ENCODE measurements at regions of chr1 and their contacts with region 1.

Region 1: DNA sequence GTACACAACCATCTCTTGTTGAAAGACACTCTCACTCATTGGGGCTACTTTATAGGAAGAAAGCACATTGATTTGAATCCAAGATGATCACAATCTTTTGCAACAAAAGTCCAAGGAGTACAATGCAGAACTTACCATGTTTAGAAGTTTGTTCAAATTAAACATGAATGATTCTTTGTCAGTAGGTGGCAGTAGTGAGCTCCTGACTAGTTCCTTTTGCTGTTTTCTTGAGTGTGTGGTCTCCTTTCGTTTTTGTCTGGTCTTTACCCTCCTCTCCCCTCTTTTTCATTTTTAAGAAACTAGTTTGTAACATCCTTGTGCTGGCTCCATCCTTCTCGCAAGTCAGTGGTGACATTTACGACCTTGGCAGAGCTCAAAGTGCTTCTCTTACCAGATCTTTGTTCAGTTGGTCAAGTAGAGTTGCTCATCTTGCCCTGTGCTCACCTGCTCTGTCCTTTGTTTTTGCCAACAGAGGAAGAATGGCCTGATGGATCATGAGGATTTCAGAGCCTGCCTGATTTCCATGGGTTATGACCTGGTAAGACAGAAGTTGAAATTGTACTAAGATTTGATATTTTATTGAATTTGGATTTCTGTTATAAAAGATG is 35.7 kb upstream of the MTR start:
- DNase-seq: no peak
- ATAC-seq: peak; percentile 49
- H3K4me3 Mint-ChIP-seq: no peak overlapping the region
- H3K27ac Mint-ChIP-seq: no peak overlapping the region
- H3K4me1 Mint-ChIP-seq: peaks cover 2% of the 10 kb centered on the region
- H3K27me3 Mint-ChIP-seq: no peaks in the 10 kb centered on the region

Region 2: GRCh38 chr1:236677641-236678235 is 81.6 kb before region 1 on chr1:
- CTCF ChIA-PET with region 1: interaction called, 10 read pairs
- POLR2A ChIA-PET with region 1: no interaction called
- intact Hi-C with region 1: no loop called
- DNase-seq: no peak
- ATAC-seq: no peak
- H3K4me3 Mint-ChIP-seq: no peak overlapping the region
- H3K27ac Mint-ChIP-seq: no peak overlapping the region
- H3K4me1 Mint-ChIP-seq: no peaks in the 10 kb centered on the region
- H3K27me3 Mint-ChIP-seq: peaks cover 28% of the 10 kb centered on the region

Region 3: GRCh38 chr1:236862615-236863211 is 103.4 kb after region 1 on chr1:
- CTCF ChIA-PET with region 1: interaction called, 11 read pairs
- POLR2A ChIA-PET with region 1: no interaction called
- intact Hi-C with region 1: no loop called
- DNase-seq: no peak
- ATAC-seq: no peak
- H3K4me3 Mint-ChIP-seq: no peak overlapping the region
- H3K27ac Mint-ChIP-seq: no peak overlapping the region
- H3K4me1 Mint-ChIP-seq: peaks cover 17% of the 10 kb centered on the region
- H3K27me3 Mint-ChIP-seq: no peaks in the 10 kb centered on the region

Region 4: DNA sequence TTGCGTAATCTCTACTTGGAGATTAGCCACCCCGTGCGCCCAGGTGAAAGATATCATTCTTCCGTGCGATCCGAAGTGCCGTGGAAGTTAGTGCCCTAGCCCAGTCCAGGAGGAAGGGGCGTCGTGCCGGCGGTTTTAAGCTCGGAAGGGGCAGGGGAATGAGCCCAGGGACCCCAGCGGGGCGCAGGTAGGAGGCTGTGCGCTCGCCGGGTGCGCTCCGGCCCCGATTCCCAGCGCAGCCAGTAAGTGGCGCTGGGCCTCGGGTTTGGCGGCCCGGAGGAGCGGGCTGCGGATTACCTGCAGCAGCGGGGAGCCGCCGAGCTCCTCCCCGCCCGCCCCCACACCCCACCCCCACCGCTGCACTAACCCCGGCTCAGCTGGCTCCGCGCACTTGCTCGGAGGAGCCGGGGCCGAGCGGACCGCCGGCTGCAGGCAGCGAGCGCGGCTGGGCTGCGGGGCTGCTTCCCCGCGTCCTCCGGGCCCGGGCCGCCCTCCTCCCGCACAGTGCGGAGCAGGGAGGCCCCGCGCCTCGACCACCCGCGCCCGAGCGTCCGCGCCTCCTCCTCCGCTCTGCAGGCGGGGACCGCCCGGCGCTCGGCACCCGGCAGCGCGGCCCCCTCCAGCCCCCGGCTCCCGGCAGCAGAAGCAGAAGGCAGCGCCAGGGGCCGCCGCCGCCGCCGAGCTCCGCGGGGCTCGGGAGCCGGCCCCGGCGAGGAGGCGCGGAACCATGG is 282.6 kb after region 1 on chr1 and contains the start of gene RYR2:
- CTCF ChIA-PET with region 1: no interaction called
- POLR2A ChIA-PET with region 1: no interaction called
- intact Hi-C with region 1: loop called in 1 of 2 experiments (anchors 5 kb)
- DNase-seq: peak; percentile 52
- ATAC-seq: peak; percentile 75
- H3K4me3 Mint-ChIP-seq: no peak within 1 kb of the TSS
- H3K27ac Mint-ChIP-seq: no peak within 1 kb of the TSS
- H3K4me1 Mint-ChIP-seq: peaks cover 16% of the 10 kb centered on the region
- H3K27me3 Mint-ChIP-seq: peaks cover 44% of the 10 kb centered on the region
- total RNA-seq, gene RYR2: 0.04 to 0.05 TPM

Region 5: GRCh38 chr1:237467320-237467719 is 708.0 kb after region 1 on chr1:
- CTCF ChIA-PET with region 1: no interaction called
- POLR2A ChIA-PET with region 1: no interaction called
- intact Hi-C with region 1: no loop called
- DNase-seq: no peak
- ATAC-seq: no peak
- H3K4me3 Mint-ChIP-seq: no peak overlapping the region
- H3K27ac Mint-ChIP-seq: no peak overlapping the region
- H3K4me1 Mint-ChIP-seq: no peaks in the 10 kb centered on the region
- H3K27me3 Mint-ChIP-seq: no peaks in the 10 kb centered on the region

Region 6: DNA sequence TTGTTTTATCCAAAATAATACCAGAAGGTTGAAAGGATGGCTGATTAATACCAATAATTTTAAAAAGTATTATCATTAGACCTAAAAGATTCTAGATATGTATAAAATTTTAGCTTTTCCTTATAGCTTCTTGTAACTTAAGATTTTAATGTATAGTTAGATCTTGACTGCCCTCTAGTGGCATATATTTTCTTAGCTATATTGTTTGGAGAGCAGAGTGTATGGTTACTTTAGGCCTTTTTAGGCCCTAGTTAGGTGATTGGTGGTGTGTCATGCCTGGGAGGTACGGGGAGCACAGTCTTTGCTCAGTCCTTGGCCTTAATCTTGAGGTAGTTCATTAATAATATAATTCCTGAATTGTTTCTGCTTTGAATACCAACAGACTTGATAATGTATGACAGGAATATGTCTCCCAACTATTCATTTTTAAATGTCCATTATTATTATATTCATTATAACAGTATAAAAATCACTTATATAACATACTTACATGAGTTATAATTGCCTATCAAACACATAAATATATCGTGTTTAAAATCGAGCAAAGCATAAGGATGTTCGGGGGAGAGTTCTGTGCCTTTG is 803.0 kb after region 1 on chr1:
- CTCF ChIA-PET with region 1: interaction called, 5 read pairs
- POLR2A ChIA-PET with region 1: no interaction called
- intact Hi-C with region 1: loop called in 1 of 2 experiments (anchors 1 kb)
- DNase-seq: no peak
- ATAC-seq: peak; percentile 72
- H3K4me3 Mint-ChIP-seq: no peak overlapping the region
- H3K27ac Mint-ChIP-seq: no peak overlapping the region
- H3K4me1 Mint-ChIP-seq: no peaks in the 10 kb centered on the region
- H3K27me3 Mint-ChIP-seq: peaks cover 11% of the 10 kb centered on the region

Measured in activated CD4-positive, alpha-beta T cell treated with anti-CD3 and anti-CD28 coated beads for 36 hours (primary cell).